ENCODE measurements at regions of chr5 and their contacts with region 1.

Region 1: DNA sequence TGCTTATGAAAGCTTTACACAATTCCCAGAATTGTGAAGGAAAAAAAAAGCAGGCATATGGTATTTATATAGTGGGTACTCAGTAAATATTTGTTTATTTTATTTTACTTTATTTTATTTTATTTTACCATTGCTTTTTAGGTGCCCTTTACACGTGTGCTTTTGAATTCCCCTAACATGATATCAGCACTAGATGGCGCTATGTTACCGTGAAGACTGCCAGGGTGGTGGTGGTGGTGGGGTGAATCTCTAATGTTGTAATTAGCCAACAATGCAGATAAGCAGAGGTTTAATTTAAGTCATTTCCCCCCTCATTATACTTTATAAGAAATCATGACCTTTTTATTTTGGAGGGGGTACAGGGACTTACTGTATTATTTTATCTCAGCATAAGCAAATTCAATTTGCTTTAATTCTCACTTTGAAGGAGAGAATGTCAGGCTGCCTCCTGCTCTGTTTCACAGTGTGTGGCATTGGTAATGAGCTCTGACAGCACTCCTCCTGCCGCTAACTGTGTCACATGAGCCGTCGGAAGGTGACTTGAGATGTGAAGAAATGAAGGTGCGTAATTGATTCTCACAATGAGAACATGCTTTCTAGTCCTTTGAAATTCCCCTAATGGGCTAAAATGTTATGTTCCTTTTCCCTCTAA is 165.6 kb downstream of the YTHDC2 start:
- DNase-seq: no peak
- H3K4me3 ChIP-seq: no peak overlapping the region
- H3K27ac ChIP-seq: no peak overlapping the region
- H3K27me3 ChIP-seq: no peaks in the 10 kb centered on the region
- CTCF ChIP-seq: peak; percentile 73

Region 2: GRCh38 chr5:113663880-113664541 is 15.0 kb before region 1 on chr5:
- CTCF ChIA-PET with region 1: interaction called, 38 read pairs
- POLR2A ChIA-PET with region 1: no interaction called
- DNase-seq: peak; percentile 13
- H3K4me3 ChIP-seq: no peak overlapping the region
- H3K27ac ChIP-seq: no peak overlapping the region
- H3K27me3 ChIP-seq: peaks cover 6% of the 10 kb centered on the region
- CTCF ChIP-seq: peak; percentile 68

Measured in AG04450 (cell line).